BJ (cell line): ENCODE measurements at regions of chr7 and their contacts with region 1.

Region 1: GRCh38 chr7:27046854-27047549 is 48.8 kb downstream of the HOXA1 start:
- DNase-seq: no peak
- H3K4me3 ChIP-seq: no peak overlapping the region
- H3K27me3 ChIP-seq: no peaks in the 10 kb centered on the region
- CTCF ChIP-seq: no peak

Region 2: GRCh38 chr7:26880852-26881251 is 166.2 kb before region 1 on chr7:
- CTCF ChIA-PET with region 1: no interaction called
- POLR2A ChIA-PET with region 1: interaction called, 13 read pairs
- DNase-seq: no peak
- H3K4me3 ChIP-seq: no peak overlapping the region
- H3K27me3 ChIP-seq: no peaks in the 10 kb centered on the region; the same call in 1 of the 2 replicates
- CTCF ChIP-seq: no peak